H1 (cell line): ENCODE measurements at regions of chr12 and their contacts with region 1.

Region 1: DNA sequence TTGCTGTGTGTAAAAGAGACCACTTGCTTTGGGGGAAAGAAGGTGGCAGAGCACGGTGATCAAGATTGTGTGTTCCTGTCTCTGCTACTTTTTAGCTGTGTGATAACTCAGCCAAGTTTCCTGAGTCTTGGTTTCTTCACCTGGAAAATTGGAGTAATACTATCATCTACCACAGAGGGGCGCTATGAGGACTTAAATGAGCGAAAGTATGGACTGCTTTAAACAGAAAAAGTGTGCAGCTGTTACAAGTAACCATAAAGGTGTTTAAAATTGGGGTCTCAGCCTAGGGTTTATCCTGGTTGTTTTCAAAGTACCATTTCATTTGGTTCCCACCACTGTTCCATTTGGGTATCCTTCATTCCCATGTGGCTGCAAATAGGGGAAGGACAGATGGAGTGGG is 65.9 kb upstream of the WSCD2 start:
- DNase-seq: no peak
- H3K4me3 ChIP-seq: no peak overlapping the region
- H3K27ac ChIP-seq: no peak overlapping the region
- H3K4me1 ChIP-seq: no peaks in the 10 kb centered on the region
- H3K27me3 ChIP-seq: no peaks in the 10 kb centered on the region; a peak in 1 of 7 replicates
- CTCF ChIP-seq: peak in 2 of 3 experiments; percentile 60 to 69; a peak in 2 of 4 replicates
- EP300 ChIP-seq: no peak
- POLR2A ChIP-seq: no peak
- RAD21 ChIP-seq: peak; percentile 83 to 88

Region 2: DNA sequence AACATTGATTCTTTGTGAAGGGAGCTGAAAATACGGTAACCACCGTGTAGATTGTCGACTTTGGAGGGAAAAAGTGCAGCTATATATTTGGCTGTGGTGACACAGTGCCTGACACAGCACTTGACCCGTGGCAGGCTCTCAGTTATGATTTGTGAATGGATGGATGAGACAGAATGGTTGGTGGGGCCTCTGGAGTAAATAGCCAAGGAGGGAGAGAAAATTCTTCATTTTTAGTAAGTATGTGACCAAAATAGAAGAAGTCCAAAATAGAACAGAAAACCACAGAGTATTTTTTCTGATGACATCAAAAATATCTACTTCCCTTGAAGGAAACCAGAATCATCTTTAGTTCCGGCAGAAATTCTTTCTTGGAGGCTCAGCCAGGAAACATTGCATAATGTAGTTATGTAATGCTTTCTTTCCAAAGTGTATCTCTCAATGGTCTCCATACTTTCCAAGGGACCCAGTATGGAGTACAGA is 16.1 kb before region 1 on chr12:
- CTCF ChIA-PET with region 1: interaction called, 11 read pairs
- POLR2A ChIA-PET with region 1: interaction called, 4 read pairs
- DNase-seq: no peak
- H3K4me3 ChIP-seq: no peak overlapping the region
- H3K27ac ChIP-seq: no peak overlapping the region
- H3K4me1 ChIP-seq: no peaks in the 10 kb centered on the region
- H3K27me3 ChIP-seq: 0 out of 7 replicates have a peak, but pooled peaks cover 0 to 2% (median 0%) of the 10 kb centered on the region in 4 experiments
- CTCF ChIP-seq: no peak
- EP300 ChIP-seq: no peak
- POLR2A ChIP-seq: no peak
- RAD21 ChIP-seq: no peak

Region 3: DNA sequence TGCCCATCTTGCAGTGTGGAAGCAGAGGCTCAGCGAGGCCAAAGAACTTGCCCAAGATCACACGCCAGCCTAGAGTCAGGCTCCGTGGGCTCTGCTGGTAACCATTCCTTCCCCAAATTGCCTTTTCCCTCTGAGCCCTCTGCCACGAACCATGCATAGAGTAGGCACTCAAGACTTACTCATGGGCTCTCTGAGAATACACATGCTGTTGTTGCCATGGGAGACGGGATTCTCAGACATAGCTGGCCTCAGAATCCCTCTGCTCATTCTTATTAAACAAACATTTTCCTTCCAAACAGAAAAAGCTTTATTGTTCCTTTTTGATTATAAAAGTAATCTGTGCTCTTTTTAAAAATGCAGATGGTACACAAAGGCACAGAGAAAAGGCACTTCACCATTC is 13.4 kb after region 1 on chr12:
- CTCF ChIA-PET with region 1: interaction called, 29 read pairs
- POLR2A ChIA-PET with region 1: no interaction called
- DNase-seq: no peak
- H3K4me3 ChIP-seq: no peak overlapping the region
- H3K27ac ChIP-seq: no peak overlapping the region
- H3K4me1 ChIP-seq: peaks cover 0 to 4% (median 0%) of the 10 kb centered on the region in 4 experiments; a peak in 1 of 7 replicates
- H3K27me3 ChIP-seq: no peaks in the 10 kb centered on the region
- CTCF ChIP-seq: no peak
- EP300 ChIP-seq: no peak
- POLR2A ChIP-seq: no peak
- RAD21 ChIP-seq: no peak

Region 4: DNA sequence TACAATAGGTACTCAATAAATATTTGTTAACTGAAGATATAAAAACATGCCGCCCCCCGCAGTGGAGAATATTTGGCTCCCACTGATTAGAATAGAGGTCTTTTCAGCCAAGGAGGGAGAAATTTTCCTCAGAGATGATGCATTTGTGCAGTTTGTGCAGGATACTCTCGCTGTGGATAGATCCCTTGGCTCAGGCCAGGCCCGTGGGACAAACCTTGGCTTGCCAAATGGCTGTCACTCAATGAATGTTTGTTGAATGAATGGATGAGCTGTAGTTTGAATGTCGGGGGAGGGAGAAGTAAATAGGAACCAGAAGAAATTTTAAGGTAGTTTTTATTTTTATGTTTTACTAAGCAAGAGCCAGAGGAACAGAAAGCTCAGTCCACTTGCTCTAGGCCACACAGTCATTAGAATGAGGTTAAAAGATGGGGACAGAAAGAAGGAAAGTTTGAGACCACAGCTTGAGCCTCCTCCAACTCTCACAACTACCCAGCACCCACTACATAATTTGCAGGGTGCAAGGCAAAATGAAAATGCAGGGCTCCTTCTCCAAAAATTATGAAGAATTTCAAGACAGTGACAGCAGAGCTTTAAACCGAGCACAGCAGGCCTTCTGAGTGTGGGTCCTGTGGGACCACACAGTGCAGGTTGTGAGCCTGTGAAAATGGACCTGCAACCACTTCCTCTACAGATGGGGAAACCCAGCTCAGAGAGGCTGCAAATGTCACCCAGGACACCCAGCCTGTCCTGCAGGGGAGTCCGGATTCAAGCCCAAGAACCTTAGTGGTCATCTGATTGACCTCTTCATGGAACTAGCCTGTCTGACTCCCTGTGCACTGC is 117.3 kb after region 1 on chr12:
- CTCF ChIA-PET with region 1: interaction called, 22 read pairs
- POLR2A ChIA-PET with region 1: no interaction called
- DNase-seq: no peak
- H3K4me3 ChIP-seq: no peak overlapping the region
- H3K27ac ChIP-seq: no peak overlapping the region; the same call in 1 of the 2 replicates
- H3K4me1 ChIP-seq: peaks cover 0 to 4% (median under 1%) of the 10 kb centered on the region in 4 experiments; a peak in 3 of 7 replicates
- H3K27me3 ChIP-seq: no peaks in the 10 kb centered on the region
- CTCF ChIP-seq: no peak
- EP300 ChIP-seq: no peak
- POLR2A ChIP-seq: no peak
- RAD21 ChIP-seq: no peak

Region 5: DNA sequence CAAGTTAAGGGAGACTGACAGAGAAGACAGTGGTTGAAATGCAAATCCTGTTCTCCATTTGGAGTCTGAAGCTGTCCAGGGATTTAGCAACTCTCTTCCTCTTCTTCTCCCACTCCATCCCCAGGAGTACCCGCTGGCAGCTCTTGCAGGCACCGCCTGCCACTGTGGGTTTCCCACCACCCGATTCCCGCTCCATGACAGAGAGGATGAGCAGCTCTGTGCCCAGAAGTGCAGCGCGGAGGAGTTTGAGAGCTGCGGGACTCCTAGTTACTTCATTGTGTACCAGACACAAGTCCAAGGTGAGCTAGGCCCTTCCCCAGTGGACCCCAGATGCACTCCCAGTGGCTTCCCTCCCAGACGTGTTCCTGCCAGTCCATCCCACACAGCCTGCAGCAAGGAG is 163.7 kb after region 1 on chr12:
- CTCF ChIA-PET with region 1: interaction called, 13 read pairs
- POLR2A ChIA-PET with region 1: no interaction called
- DNase-seq: no peak
- H3K4me3 ChIP-seq: no peak overlapping the region
- H3K27ac ChIP-seq: no peak overlapping the region
- H3K4me1 ChIP-seq: peaks cover 0 to 5% (median 0%) of the 10 kb centered on the region in 4 experiments; a peak in 1 of 7 replicates
- H3K27me3 ChIP-seq: no peaks in the 10 kb centered on the region
- CTCF ChIP-seq: no peak
- EP300 ChIP-seq: no peak
- POLR2A ChIP-seq: no peak
- RAD21 ChIP-seq: no peak